ENCODE measurements at regions of chr11 and their contacts with region 1.

Region 1: DNA sequence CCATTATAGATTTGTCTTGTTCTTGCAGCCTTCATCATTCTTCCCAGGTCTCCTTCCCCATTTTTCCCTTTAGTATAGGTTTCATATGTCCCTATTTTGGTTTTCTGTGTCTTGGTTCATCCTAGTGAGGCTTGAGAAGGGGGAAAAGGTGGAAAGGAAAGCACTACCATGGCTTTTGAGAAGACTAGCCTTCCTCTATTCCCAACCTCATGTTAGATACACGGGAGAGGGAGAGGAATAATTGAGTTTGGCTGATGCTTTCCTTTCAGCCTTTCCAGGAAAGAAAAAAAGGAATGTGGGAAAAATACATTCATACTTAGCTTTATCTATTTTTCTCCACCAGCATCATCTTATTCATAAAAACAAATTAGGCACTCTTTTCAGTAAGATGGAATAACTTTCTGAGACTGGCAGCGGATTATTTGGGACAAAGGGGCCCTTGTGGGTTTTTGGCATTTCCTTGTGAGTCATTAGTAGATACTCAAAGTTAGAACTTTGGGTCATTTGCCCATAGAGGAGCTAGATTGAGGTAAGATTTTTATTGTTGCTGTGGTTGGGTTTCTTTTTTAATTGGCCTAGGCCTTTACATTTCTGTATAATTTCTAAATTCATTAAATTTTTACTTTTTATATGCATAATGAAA is 23.8 kb downstream of the CAPRIN1 start:
- DNase-seq: no peak
- ATAC-seq: no peak
- H3K4me3 ChIP-seq: no peak overlapping the region
- H3K4me3 Mint-ChIP-seq: no peak overlapping the region
- H3K27ac ChIP-seq: peak overlapping the region; percentile 47
- H3K27ac Mint-ChIP-seq: peak overlapping the region in 7 of 9 donors; percentile 0 to 84 (median 52)
- H3K4me1 ChIP-seq: peaks cover 7 to 12% of the 10 kb centered on the region in 2 donors
- H3K4me1 Mint-ChIP-seq: peaks cover 8 to 51% (median 48%) of the 10 kb centered on the region in 7 donors
- H3K27me3 ChIP-seq: no peaks in the 10 kb centered on the region
- H3K27me3 Mint-ChIP-seq: no peaks in the 10 kb centered on the region

Region 2: GRCh38 chr11:33987975-33988580 is 87.2 kb before region 1 on chr11:
- CTCF ChIA-PET with region 1: no interaction called
- POLR2A ChIA-PET with region 1: no interaction called
- intact Hi-C with region 1: no loop called
- DNase-seq: peak; percentile 41 to 78 (median 64)
- ATAC-seq: peak; percentile 88
- H3K4me3 ChIP-seq: no peak overlapping the region
- H3K4me3 Mint-ChIP-seq: no peak overlapping the region
- H3K27ac ChIP-seq: no peak overlapping the region
- H3K27ac Mint-ChIP-seq: no peak overlapping the region
- H3K4me1 ChIP-seq: no peaks in the 10 kb centered on the region
- H3K4me1 Mint-ChIP-seq: peaks cover 0 to 11% (median 9%) of the 10 kb centered on the region in 7 donors
- H3K27me3 ChIP-seq: no peaks in the 10 kb centered on the region
- H3K27me3 Mint-ChIP-seq: peaks cover 0 to 5% (median 2%) of the 10 kb centered on the region in 5 donors

Region 3: DNA sequence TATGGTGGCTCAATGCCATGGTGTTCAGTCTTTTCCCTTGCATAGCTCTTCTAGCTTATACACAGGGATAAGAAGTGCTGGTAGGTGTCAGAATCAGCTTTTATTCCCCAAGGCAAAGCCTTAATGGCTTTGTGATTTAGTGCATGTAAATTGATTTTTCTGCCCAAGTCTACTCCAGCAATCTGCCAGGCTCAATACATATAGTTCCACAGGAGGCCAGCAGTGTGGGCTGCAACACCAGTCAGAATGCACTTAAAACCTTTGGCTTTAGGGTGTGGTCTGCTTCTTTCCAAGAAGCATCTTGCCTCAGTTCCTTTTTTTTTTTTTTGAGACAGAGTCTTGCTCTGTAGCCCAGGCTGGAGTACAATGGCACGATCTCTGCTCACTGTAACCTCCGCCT is 38.3 kb before region 1 on chr11:
- CTCF ChIA-PET with region 1: no interaction called
- POLR2A ChIA-PET with region 1: no interaction called
- intact Hi-C with region 1: no loop called
- DNase-seq: no peak
- ATAC-seq: no peak
- H3K4me3 ChIP-seq: no peak overlapping the region
- H3K4me3 Mint-ChIP-seq: no peak overlapping the region
- H3K27ac ChIP-seq: no peak overlapping the region
- H3K27ac Mint-ChIP-seq: no peak overlapping the region
- H3K4me1 ChIP-seq: no peaks in the 10 kb centered on the region
- H3K4me1 Mint-ChIP-seq: peaks cover 0 to 2% (median 0%) of the 10 kb centered on the region in 7 donors
- H3K27me3 ChIP-seq: no peaks in the 10 kb centered on the region
- H3K27me3 Mint-ChIP-seq: peaks cover 0 to 4% (median 0%) of the 10 kb centered on the region in 5 donors

Region 4: DNA sequence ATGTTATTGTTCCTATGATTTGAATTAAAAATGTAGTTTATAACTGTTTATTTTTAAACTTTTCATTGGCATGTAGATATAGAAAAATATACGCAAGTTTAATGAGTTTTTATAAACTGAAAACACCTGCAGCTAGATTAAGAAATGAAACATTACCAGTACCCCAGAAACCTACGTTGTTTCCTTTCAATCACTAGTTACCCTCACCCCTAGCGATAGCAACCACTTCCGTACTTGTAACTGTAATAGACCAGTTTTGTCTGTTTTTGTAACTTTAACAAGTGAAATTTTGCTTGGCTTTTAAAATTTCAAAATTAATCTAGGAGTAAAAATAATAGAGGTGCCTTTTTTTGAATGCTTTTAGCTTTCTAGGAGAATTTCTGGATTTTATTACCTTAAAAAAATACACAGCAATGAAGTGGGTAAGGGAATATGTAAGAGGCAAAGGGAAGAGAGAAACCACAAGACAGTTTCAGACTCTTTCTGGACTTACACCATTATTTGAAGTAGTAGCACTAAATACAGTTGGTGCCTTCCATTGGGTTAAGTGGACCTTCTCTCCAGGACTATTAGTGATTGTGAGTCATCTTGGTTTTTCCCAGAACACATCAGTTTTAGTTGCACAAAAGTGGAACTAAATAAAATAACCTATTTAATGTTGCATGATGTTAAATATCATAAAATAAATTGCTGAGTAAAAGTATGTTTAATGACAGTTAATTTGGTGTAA is 11.4 kb after region 1 on chr11:
- CTCF ChIA-PET with region 1: interaction called, 11 read pairs
- POLR2A ChIA-PET with region 1: interaction called, 3 read pairs
- intact Hi-C with region 1: loop called in 1 of 2 experiments (anchors 1 kb)
- DNase-seq: peak in 2 of 9 donors; percentile 18 to 31
- ATAC-seq: peak; percentile 65
- H3K4me3 ChIP-seq: no peak overlapping the region
- H3K4me3 Mint-ChIP-seq: peak overlapping the region in 6 of 10 donors; percentile 5 to 35 (median 28)
- H3K27ac ChIP-seq: peak overlapping the region; percentile 31
- H3K27ac Mint-ChIP-seq: peak overlapping the region; percentile 32 to 91 (median 76)
- H3K4me1 ChIP-seq: peaks cover 0 to 3% of the 10 kb centered on the region in 2 donors
- H3K4me1 Mint-ChIP-seq: peaks cover 3 to 30% (median 18%) of the 10 kb centered on the region in 7 donors
- H3K27me3 ChIP-seq: no peaks in the 10 kb centered on the region
- H3K27me3 Mint-ChIP-seq: no peaks in the 10 kb centered on the region